Testis (tissue), 5 donors: ENCODE measurements at regions of chr6 and their contacts with region 1.

Region 1: GRCh38 chr6:36985808-36986703 is at the start of gene MTCH1:
- DNase-seq: peak; percentile 92
- H3K4me3 ChIP-seq: peak within 1 kb of the TSS; percentile 92 to 100
- H3K27ac ChIP-seq: peak within 1 kb of the TSS; percentile 92 to 98
- H3K4me1 ChIP-seq: peaks cover 39% of the 10 kb centered on the region
- H3K27me3 ChIP-seq: no peaks in the 10 kb centered on the region
- CTCF ChIP-seq: peak in 1 of 3 experiments; percentile 5
- POLR2A ChIP-seq: peak; percentile 89
- total RNA-seq, gene MTCH1: 227 to 316 TPM

Region 2: DNA sequence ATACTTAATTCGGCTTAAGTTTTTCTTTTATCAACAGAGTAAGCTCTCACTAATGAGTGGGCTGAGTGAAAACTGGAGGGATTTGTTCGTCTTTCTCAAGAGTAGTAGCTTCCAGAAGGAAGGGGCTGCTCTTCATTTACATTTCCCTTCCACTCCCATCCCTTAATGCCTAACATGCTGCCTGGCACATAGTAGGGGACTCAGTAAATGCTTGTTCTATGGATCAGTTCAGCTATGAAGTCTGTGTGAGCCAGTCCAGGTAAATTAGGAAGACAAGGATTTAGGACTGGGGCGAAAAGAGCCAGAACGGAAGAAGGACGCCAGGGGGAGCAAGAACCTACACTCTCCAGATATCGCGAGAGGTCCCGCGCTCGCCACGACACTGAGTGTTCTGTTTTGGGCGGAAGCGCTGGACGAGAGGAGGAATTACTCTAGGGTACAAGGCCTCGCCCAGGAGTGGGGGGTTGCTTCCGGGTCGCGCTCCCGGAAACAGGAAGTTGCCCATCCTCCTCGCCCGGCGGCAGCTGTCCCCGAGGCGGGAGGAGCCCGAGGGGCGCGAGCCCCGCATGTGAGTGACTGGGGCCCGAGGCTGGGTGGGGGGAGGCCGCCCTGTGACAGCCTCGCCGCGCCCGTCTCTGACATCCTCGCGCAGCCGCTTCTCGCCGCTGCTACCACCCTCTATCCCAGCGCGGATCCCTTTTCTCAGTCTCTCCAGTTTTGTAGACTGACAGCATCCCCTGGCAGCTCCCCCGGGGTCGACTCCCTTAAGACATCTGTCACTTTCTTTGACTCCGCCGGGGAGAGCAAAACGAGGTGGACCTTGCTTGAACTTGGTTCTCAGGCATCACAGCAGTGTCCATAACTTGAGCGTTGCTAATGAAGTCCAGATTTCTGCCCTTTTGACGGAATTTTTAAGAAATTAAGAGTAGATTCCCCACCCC is 100.3 kb before region 1 on chr6 and contains the start of gene C6orf89:
- intact Hi-C with region 1: loop called (anchors 10 kb)
- DNase-seq: peak; percentile 99
- H3K4me3 ChIP-seq: peak within 1 kb of the TSS; percentile 82 to 85
- H3K27ac ChIP-seq: peak within 1 kb of the TSS; percentile 83 to 88
- H3K4me1 ChIP-seq: peaks cover 35% of the 10 kb centered on the region
- H3K27me3 ChIP-seq: no peaks in the 10 kb centered on the region
- CTCF ChIP-seq: peak; percentile 82 to 98 (median 96)
- POLR2A ChIP-seq: peak; percentile 32
- total RNA-seq, gene C6orf89: 78.9 to 80.3 TPM